ENCODE measurements at regions of chr15 and their contacts with region 1.

Region 1: DNA sequence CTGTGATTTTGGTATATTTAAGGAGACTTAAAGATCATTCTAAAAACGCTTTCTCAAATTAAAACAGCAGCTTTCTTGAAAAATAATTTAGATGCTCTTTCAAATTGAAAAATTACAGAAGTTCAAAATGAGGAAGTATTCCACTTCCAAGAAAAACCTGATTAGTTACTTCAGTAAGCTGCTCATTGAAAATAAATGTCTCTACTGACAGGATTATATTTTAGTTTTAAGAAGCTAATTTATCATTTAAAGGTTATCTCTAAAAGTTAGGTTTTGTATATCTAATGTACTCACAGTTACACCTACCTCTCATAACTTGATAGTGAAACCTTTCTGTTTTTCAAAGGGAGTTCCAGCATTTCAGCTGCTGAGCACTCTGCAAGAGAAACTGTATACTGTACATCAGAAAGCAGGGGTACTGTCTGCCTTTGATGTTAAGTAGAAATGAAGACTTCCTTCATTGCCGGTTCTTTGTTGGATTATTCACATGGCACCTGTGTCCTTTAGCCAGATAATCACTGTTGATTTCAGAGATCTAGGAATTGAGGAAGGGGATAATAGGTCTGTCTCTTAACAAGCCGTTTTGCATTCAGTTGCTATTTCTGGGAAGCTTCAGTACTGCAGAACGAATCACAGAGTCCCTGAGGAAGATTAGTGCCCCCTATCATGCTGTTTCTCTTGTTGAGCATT is 161.6 kb downstream of the TCF12 start:
- DNase-seq: no peak

Region 2: DNA sequence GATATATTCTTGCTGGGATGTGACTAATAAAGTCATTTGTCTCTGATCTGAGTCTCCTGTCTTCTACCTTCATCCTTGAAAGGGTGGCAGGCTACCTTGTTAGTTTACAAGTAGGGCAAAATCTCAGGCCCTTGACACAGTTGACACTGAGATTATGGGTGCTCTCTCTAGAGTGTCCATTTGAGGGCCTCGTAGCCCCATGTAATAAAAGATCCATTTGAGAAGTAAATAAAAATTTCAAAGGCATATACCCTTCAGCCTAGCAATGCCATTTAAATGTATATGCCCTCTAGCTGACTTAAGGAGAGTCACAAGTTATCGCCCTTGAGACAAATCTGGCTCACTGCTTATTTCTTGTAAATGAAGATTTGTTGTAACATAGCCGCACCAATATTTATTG is 63.1 kb before region 1 on chr15:
- intact Hi-C with region 1: loop called (anchors 5 kb)
- DNase-seq: no peak

Measured in posterior cingulate gyrus (tissue), 11 donors.